Thyroid gland (tissue), 4 donors: ENCODE measurements at regions of chr2 and their contacts with region 1.

Region 1: GRCh38 chr2:55961318-55961911 is 37.8 kb upstream of the EFEMP1 start:
- DNase-seq: no peak
- H3K4me3 ChIP-seq: no peak overlapping the region
- H3K27ac ChIP-seq: no peak overlapping the region
- H3K4me1 ChIP-seq: peaks cover 6 to 24% of the 10 kb centered on the region in 2 donors
- H3K27me3 ChIP-seq: no peaks in the 10 kb centered on the region
- CTCF ChIP-seq: peak; percentile 31 to 81 (median 52)
- POLR2A ChIP-seq: no peak

Region 2: DNA sequence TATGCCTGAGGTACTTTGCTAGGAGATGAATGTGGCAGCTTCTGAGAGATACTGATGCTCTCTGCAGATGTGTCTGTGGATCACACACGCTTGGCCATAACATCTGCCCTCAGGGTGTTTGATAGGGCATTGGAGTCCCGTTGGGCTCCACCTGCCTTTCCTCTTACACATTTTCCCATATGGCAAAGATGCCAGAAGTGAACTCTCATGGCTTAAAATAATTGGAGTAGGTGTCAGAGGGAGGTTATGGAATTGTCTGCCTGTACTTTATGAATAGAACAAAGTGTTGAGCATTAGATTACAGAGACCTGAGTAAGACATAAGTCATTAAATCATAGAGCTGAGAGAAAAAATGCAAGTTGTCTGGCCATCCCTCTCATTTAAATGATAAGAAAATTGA is 192.4 kb before region 1 on chr2:
- intact Hi-C with region 1: loop called (anchors 5 kb)
- DNase-seq: no peak
- H3K4me3 ChIP-seq: no peak overlapping the region
- H3K27ac ChIP-seq: no peak overlapping the region
- H3K4me1 ChIP-seq: peaks cover 3 to 17% of the 10 kb centered on the region in 2 donors
- H3K27me3 ChIP-seq: no peaks in the 10 kb centered on the region
- CTCF ChIP-seq: no peak
- POLR2A ChIP-seq: no peak